CD4-positive, alpha-beta memory T cell (primary cell): ENCODE measurements at regions of chr1 and their contacts with region 1.

Region 1: GRCh38 chr1:156193488-156194299 is at the start of gene SLC25A44:
- DNase-seq: peak; percentile 98 to 99 (median 98)
- H3K4me3 ChIP-seq: peak within 1 kb of the TSS; percentile 88 to 92
- H3K4me3 Mint-ChIP-seq: peak within 1 kb of the TSS; percentile 93 to 99 (median 96)
- H3K27ac ChIP-seq: peak within 1 kb of the TSS; percentile 79
- H3K27ac Mint-ChIP-seq: peak within 1 kb of the TSS; percentile 75 to 97 (median 96)
- H3K4me1 ChIP-seq: peaks cover 48% of the 10 kb centered on the region
- H3K4me1 Mint-ChIP-seq: peaks cover 26 to 58% (median 40%) of the 10 kb centered on the region in 4 donors
- H3K27me3 ChIP-seq: no peaks in the 10 kb centered on the region
- H3K27me3 Mint-ChIP-seq: no peaks in the 10 kb centered on the region
- total RNA-seq, gene SLC25A44: 21.2 to 23.3 TPM

Region 2: DNA sequence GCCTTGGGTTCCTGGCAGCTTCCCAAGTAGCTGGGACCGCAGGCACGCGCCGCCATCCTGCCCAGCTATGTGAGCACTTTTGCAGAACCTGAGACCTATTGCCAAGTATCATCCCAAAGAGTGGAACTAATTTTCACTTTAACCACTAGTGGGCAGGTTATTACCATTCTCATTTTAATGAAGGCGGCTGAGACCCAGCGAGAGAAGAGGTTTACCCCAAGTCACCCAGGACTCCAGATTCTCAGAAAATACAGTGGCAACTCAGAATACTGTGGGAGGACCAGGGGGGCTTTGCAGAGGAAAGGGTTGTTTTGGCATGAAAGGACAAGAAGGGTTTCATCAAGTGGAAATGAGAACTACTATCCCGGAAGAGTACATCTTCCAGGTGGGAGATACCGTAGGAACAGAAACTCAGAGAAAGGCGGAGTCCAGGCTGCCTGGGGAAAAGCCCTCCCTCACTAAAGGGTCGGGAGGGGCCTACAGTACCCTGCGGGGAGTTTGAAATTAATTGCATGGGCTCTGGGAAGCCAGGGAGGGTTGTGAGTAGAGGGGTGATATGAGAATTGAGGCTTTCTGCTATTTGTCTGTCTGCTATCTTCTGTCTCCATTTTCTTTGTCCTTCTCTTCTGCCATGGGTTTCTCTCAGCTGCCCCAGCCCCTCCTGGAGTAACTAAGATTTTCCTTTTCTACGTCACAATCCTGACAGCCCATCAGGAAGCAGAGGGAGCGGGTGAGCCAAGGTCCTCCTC is 47.5 kb before region 1 on chr1:
- CTCF ChIA-PET with region 1: interaction called, 4 read pairs
- POLR2A ChIA-PET with region 1: no interaction called
- intact Hi-C with region 1: loop called (anchors 1 kb)
- DNase-seq: peak; percentile 61 to 76 (median 73)
- H3K4me3 ChIP-seq: no peak overlapping the region
- H3K4me3 Mint-ChIP-seq: peak overlapping the region; percentile 60 to 87 (median 76)
- H3K27ac ChIP-seq: no peak overlapping the region
- H3K27ac Mint-ChIP-seq: peak overlapping the region in 6 of 7 donors; percentile 72 to 92 (median 80)
- H3K4me1 ChIP-seq: peaks cover 11% of the 10 kb centered on the region
- H3K4me1 Mint-ChIP-seq: peaks cover 8 to 22% (median 13%) of the 10 kb centered on the region in 4 donors
- H3K27me3 ChIP-seq: no peaks in the 10 kb centered on the region
- H3K27me3 Mint-ChIP-seq: peaks cover 0 to 3% of the 10 kb centered on the region in 2 donors

Region 3: GRCh38 chr1:156212833-156213643 is 19.3 kb after region 1 on chr1 and contains the start of gene PMF1:
- CTCF ChIA-PET with region 1: interaction called, 7 read pairs
- POLR2A ChIA-PET with region 1: interaction called, 54 read pairs
- intact Hi-C with region 1: loop called (anchors 1 kb)
- DNase-seq: peak; percentile 94 to 98 (median 95)
- H3K4me3 ChIP-seq: peak within 1 kb of the TSS; percentile 83 to 93
- H3K4me3 Mint-ChIP-seq: peak within 1 kb of the TSS; percentile 93 to 99 (median 96)
- H3K27ac ChIP-seq: peak within 1 kb of the TSS; percentile 98
- H3K27ac Mint-ChIP-seq: peak within 1 kb of the TSS; percentile 97 to 100 (median 99)
- H3K4me1 ChIP-seq: peaks cover 29% of the 10 kb centered on the region
- H3K4me1 Mint-ChIP-seq: peaks cover 15 to 43% (median 31%) of the 10 kb centered on the region in 4 donors
- H3K27me3 ChIP-seq: no peaks in the 10 kb centered on the region
- H3K27me3 Mint-ChIP-seq: no peaks in the 10 kb centered on the region
- total RNA-seq, gene PMF1: 39.0 to 40.2 TPM

Region 4: DNA sequence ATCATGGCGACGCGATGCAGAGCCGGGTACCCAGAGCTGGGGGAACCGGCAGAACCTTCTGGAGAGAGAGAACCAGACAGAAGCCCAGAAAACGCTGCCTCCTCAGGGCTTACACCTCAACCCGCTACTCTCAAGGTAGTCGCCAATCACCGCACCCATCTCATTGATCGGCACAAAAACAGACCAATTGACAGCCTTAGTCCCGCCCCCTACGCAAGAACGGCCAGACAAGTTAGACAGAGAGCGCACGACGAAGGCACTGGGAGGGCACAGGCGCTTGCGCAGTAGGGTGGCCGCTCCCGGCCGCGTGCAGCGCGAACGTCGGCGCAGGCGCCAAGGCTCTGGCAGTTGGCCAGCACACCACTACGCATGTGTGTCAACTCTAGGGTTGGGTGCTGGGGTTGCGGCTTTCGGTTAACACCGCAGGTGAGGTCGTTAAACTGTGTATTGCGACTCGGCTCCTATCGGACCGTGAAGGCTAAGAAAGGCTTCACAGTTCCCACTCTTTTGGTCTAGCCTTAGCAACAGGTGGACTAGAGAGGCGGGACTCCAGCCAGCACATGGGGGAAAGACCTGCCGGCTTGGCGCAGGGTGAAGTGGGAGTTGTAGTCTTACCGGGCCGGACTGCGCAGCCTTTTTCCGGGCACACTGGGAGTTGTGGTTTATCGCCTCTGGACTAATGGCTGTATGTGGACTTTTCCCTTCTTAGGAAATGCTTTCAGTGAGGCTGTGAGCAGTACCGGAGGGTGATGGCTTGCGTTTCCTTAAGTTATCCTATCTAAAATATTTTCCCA is 144.7 kb after region 1 on chr1 and contains the starts of genes CCT3 and TSACC:
- CTCF ChIA-PET with region 1: no interaction called
- POLR2A ChIA-PET with region 1: no interaction called
- intact Hi-C with region 1: loop called (anchors 1 kb)
- DNase-seq: peak; percentile 100
- H3K4me3 ChIP-seq: peak within 1 kb of the TSS; percentile 94 to 95
- H3K4me3 Mint-ChIP-seq: peak within 1 kb of the TSS; percentile 94 to 99 (median 98)
- H3K27ac ChIP-seq: peak within 1 kb of the TSS; percentile 75
- H3K27ac Mint-ChIP-seq: peak within 1 kb of the TSS; percentile 91 to 100 (median 99)
- H3K4me1 ChIP-seq: peaks cover 28% of the 10 kb centered on the region
- H3K4me1 Mint-ChIP-seq: peaks cover 22 to 46% (median 35%) of the 10 kb centered on the region in 4 donors
- H3K27me3 ChIP-seq: no peaks in the 10 kb centered on the region
- H3K27me3 Mint-ChIP-seq: peaks cover 0 to 1% of the 10 kb centered on the region in 2 donors
- total RNA-seq, gene CCT3: 109 TPM
- total RNA-seq, gene TSACC: not detected